GM10248 (cell line): ENCODE measurements at regions of chr17 and their contacts with region 1.

Region 1: DNA sequence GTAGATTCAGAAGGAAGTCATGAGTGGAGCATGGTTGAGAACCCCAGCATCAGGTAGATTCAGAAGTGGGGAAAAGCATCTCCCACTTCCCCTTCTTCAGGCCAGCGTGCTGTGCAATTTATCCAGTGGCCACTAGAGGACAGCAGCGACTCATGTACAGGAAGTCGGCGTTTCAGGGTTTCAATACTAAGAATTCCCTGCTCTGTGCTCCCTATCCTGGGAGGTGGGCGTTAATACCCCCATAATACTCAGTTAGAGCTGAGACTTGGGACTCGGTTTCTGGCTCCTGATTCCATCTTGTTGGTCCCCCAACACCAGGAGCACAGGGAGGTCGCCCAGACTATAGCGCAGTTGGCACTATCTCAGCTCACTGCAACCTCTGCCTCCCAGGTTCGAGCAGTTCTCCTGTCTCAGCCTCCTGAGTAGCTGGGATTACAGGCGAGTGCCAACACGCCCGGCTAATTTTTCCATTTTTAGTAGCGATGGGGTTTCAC is 75.3 kb upstream of the AMZ2 start:
- DNase-seq: peak; percentile 34
- CTCF ChIP-seq: peak; percentile 96

Region 2: GRCh38 chr17:68152161-68152571 is 20.3 kb before region 1 on chr17:
- CTCF ChIA-PET with region 1: interaction called, 17 read pairs
- POLR2A ChIA-PET with region 1: no interaction called
- DNase-seq: no peak
- CTCF ChIP-seq: no peak

Region 3: DNA sequence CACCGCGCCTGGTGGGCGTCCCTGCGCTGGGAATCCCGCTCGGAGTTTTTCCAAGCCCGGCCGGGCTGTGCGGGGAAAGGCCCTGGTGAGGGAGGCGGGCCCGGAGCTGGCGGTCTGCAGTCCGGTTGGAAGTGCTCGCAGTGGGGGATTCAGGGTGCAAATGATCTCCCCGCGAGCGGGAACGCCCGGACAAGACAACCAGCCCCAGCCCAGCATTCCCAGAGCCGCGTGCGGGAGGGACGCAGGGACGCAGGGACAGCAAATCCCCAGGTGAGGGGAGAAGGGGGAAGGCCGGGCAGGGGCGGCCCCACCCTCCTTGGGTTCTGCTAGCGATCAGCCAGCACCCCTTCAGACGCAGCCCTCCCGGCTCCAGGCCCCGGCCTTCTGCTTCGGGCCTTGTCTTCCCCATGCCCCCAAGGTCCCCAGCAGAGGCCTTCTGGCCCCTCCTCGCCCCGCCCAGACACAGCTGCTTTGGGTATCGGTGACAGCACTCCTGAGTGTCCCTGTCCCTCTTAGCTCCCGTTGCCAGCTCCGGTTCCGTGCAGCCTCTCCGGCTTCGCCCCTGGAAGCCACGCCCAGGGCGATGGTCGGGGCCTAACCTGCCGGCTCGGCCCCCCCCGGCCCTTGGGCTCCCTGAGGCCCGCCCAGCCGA is 24.6 kb after region 1 on chr17:
- CTCF ChIA-PET with region 1: interaction called, 50 read pairs
- POLR2A ChIA-PET with region 1: interaction called, 3 read pairs
- DNase-seq: peak; percentile 37
- CTCF ChIP-seq: no peak

Region 4: DNA sequence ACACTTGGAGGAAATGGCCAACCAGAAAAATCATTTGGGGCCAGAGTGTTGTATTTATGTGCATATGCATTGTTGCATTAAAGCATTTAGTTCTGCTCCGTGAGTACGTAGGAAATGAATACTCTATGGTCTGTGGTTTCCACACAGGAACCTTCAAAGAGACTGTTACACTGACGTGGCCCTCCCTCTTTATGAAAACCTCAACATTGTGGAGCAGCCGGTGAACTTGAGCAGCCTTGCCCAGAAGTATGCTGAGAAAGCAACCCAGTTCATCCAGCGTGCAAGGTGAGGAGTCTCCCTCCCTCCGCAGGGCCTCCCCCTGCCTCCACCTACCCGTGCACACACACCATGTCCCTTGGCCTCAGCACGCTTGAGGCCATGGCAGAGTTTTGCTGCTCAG is 184.0 kb after region 1 on chr17:
- CTCF ChIA-PET with region 1: interaction called, 10 read pairs
- POLR2A ChIA-PET with region 1: no interaction called
- DNase-seq: peak; percentile 50
- CTCF ChIP-seq: no peak

Region 5: DNA sequence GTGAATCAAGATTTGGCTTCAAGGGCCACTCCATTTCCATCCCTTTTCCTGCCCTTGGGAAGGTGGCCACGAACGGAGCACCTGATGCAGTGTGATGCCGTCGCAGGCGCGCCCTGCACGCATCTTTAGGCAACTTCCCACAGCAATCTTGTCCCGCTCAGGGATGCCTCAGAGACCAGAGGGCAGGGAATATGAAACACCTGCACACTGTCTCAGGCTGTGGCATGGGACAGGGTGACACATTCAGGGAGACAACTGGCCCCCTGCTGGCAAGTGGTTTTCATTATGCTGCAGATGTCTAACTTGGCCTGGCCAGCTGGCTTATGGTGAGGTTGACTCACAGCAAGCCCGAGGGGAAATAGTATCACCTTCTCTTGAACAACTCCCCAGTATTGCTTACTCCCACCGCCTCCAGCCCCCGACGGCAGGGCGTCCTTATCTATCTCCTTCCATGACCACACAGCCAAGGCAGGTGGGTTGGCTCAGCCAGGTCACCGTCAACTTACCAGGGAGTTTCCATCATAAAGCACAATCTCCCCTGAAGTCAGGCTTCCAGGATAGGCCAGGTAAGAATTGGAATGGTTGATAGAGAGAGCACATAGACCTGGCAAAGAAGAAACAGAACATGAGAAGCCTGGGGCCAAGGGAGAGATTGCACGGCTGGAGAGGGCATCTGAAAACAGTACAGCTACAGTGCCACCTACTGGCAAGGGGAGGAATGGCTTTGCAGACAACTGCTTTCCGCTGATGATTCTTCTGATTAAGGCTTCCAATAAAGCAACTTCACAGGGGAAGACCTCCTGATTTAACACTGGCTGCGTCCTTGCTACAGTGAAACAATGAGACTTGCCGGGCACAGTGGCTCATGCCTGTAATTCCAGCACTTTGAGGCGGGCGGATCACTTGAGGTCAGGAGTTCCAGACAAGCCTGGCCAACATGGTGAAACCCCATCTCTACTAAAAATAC is 263.7 kb after region 1 on chr17:
- CTCF ChIA-PET with region 1: interaction called, 14 read pairs
- POLR2A ChIA-PET with region 1: no interaction called
- DNase-seq: peak; percentile 78
- CTCF ChIP-seq: peak; percentile 97

Region 6: DNA sequence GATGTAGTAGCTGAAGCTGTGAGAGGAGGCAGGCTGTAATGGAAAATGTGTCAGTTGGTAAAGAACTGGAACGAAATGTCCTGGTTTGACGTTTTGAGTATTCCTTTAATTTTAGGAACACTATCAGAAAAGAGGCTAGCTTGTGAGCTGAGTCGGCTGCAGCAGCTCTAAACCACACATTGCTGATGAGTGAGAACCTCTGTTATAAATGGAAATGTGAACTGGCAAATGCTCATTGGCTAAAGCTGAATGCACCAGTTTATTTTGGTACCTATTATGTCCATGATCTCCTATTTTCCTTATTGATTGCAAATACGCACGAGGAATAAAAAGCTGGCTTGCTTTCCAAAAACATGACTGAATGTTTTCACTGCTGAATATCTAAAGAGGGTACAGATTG is 295.8 kb after region 1 on chr17:
- CTCF ChIA-PET with region 1: interaction called, 17 read pairs
- POLR2A ChIA-PET with region 1: no interaction called
- DNase-seq: no peak
- CTCF ChIP-seq: no peak